ENCODE measurements at regions of chr5 and their contacts with region 1.

Region 1: GRCh38 chr5:178163772-178164735 is 10.4 kb upstream of the NHP2 start:
- DNase-seq: peak; percentile 69
- ATAC-seq: peak; percentile 99
- H3K4me3 ChIP-seq: peak overlapping the region; percentile 15 to 46
- H3K27ac ChIP-seq: no peak overlapping the region
- H3K4me1 ChIP-seq: no peaks in the 10 kb centered on the region
- H3K27me3 ChIP-seq: no peaks in the 10 kb centered on the region
- CTCF ChIP-seq: peak; percentile 98

Region 2: DNA sequence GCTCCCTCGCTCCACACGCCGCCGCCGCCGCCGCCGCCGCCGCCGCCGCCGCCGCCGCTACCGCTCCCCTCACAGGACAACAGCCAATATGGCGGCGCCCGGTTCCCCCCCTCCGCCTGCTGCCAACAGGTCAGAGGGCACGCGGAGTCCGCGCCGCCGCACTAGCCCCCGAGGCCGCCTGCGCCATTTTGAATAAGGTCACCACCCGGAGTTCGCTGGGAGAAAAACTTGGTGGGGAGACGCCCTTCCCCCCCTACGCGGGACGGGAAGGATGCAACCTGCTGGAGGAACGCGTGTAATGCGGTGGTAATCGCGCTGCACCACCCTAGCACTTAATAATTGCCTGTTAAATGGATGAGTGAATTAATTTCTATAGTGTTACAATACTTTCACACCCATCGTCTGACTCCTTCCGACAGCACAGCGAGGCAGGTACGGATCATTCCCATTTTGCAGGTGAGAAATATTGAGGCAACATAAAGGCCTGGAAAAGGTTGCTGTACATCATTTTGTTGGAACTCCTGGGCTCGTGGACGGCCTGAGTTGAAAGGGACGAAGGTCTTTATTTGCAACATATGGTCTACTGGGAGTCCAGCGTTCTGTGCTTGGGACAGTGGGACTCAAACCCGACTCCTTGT is 609.5 kb before region 1 on chr5 and contains the start of gene FAM193B:
- CTCF ChIA-PET with region 1: no interaction called
- POLR2A ChIA-PET with region 1: interaction called, 17 read pairs
- in situ Hi-C with region 1: no loop called
- intact Hi-C with region 1: no loop called
- DNase-seq: peak; percentile 78
- ATAC-seq: peak; percentile 96
- H3K4me3 ChIP-seq: peak within 1 kb of the TSS; percentile 79 to 92
- H3K27ac ChIP-seq: peak within 1 kb of the TSS; percentile 74
- H3K4me1 ChIP-seq: peaks cover 13% of the 10 kb centered on the region
- H3K27me3 ChIP-seq: no peaks in the 10 kb centered on the region
- CTCF ChIP-seq: 0 out of 2 replicates have a peak, but pooled peaks have one; percentile 17
- total RNA-seq, gene FAM193B: 58.5 TPM

Region 3: GRCh38 chr5:178331399-178331996 is 167.4 kb after region 1 on chr5:
- CTCF ChIA-PET with region 1: no interaction called
- POLR2A ChIA-PET with region 1: no interaction called
- in situ Hi-C with region 1: no loop called
- intact Hi-C with region 1: no loop called
- DNase-seq: no peak
- ATAC-seq: no peak; the same call in 1 of the 2 replicates
- H3K4me3 ChIP-seq: no peak overlapping the region
- H3K27ac ChIP-seq: no peak overlapping the region
- H3K4me1 ChIP-seq: no peaks in the 10 kb centered on the region
- H3K27me3 ChIP-seq: peaks cover 2% of the 10 kb centered on the region; the same call in 1 of the 2 replicates
- CTCF ChIP-seq: no peak